ENCODE measurements at regions of chr7 and their contacts with region 1.

Region 1: DNA sequence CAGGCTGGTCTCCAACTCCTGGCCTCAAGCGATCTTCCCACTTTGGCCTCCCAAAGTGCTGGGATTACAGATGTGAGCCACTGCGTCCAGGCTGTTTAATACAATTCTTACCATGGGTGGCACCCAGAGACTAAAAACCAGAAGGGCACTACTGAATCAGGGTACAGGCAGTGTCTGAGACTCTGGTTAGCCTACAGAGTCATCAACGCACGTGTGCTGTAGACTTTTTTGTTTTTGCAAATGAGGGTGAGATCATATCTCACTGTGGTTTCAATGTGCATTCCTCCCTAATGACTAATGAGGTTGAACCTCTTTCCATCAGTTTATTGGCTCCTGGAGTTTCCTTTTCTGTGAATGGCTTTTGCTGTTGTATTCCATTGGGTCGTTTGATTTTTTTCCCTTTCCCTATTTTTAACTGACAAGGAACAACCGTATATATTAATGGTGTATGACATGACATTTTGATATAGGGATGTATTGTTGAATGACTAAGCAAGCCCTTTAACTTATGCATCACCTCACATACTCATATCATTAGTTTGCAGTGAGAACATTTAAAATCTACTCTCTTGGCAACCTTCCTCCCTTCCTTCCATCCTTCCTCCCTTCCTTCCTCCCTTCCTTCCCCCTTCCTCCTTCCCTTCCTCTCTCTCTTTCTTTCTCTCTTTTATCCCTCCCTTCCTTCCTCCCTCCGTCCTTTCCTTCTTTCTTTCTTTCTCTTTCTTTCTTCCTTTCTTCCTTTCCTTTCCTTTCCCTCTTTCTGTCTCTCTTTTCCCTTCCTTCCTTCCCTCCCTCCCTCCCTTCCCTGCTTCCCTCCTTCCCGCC is 9.3 kb upstream of the METTL27 start:
- DNase-seq: peak; percentile 90
- H3K4me3 ChIP-seq: no peak overlapping the region
- CTCF ChIP-seq: no peak

Region 2: GRCh38 chr7:73522105-73522872 is 329.3 kb before region 1 on chr7 and contains the start of gene BAZ1B:
- CTCF ChIA-PET with region 1: no interaction called
- POLR2A ChIA-PET with region 1: no interaction called
- DNase-seq: peak; percentile 73
- H3K4me3 ChIP-seq: peak within 1 kb of the TSS; percentile 76
- CTCF ChIP-seq: peak; percentile 16

Region 3: DNA sequence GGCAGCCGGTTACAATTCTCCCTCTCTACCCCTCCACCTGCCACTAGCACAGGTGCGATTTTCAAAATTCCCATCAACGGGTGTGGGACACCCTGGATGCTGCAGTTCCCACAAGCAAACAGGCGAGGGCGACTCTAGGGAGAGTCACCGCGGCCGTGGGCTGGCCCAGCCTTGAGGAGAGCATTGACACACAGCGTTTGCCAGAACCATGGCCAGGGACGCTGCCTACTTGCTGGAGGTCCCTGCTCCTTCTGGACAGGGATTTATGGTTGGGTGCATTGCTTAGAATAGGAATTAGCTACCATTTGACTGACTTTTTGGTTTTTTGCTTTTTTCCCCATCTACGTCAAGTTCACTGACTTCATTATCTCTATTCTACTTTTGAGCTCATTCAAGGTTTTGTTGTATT is 39.9 kb before region 1 on chr7:
- CTCF ChIA-PET with region 1: interaction called, 114 read pairs
- POLR2A ChIA-PET with region 1: no interaction called
- DNase-seq: no peak
- H3K4me3 ChIP-seq: no peak overlapping the region
- CTCF ChIP-seq: peak; percentile 87

Region 4: DNA sequence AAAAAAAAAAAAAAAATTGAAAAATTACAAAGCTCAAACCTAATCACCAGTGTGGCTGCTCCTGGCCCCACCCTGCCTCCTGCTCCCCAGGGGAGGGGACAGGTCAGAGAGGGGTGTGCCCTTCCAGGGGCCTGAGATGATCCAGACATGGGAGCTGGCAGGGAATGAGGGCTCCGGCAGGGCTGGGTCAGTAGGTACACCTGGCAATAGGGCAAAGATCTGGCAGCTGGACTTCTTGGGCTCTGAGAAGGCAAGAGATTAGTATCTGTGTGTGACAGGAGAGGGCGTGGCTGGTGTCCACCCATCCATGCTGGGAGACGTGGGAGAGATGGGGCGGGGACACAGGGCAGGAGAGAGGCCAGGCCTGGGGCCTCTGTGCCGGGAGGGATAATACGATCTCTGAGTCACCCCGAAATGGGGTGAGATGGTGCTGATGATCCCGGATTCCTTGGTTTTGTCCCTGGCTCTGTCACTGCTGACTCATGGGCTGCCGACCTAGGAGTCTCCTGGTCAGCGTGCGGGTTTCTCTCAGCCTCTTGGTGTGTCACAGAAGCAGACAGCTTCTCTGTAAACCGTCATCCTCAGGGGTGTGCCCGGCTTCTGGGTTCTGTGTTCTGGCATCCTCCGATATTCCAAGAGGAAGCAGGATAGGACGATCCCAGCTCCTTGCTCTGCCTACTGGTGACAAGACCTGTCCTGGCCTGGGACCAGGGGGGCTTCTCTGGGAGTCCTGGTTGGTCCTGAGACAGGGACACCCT is 29.1 kb before region 1 on chr7:
- CTCF ChIA-PET with region 1: interaction called, 14 read pairs
- POLR2A ChIA-PET with region 1: interaction called, 6 read pairs
- DNase-seq: peak; percentile 77
- H3K4me3 ChIP-seq: no peak overlapping the region
- CTCF ChIP-seq: no peak

Region 5: GRCh38 chr7:73828107-73828803 is 23.4 kb before region 1 on chr7:
- CTCF ChIA-PET with region 1: interaction called, 14 read pairs
- POLR2A ChIA-PET with region 1: interaction called, 6 read pairs
- DNase-seq: no peak
- H3K4me3 ChIP-seq: no peak overlapping the region
- CTCF ChIP-seq: no peak

Region 6: DNA sequence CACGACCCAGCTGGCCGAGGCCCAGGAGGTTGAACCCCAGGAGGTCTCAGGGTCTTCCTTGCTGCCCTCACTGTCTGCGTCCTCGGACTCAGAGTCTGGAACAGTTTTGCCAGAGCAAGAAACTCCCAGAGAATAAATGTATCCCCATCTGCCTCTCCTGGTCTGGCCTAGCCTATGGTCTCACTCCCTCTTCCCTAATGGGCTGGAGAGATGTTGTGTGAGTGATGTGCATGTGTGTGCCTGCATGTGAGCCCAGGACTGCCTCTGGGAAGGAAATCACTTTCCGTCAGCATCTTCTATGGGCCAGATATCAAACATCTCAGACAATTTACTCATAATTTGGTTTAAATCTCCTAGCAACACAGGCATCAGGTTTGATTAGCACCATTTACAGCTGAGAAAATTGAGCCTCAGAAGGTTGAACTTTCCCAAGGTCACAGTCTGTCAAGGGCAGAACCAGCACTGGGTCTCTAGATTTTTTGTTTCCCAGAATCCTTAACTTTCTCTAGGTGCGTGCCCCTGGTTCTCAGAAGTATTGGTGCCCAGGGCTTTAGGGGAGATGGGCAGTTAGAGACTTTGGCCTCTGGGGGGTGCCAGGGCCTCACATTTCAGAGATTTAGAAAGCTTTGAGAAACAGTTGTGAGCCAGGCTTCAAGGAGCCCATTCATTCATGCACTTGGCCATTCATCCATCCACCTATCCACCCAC is 14.3 kb after region 1 on chr7:
- CTCF ChIA-PET with region 1: interaction called, 45 read pairs
- POLR2A ChIA-PET with region 1: no interaction called
- DNase-seq: no peak
- H3K4me3 ChIP-seq: no peak overlapping the region
- CTCF ChIP-seq: peak; percentile 74

Region 7: DNA sequence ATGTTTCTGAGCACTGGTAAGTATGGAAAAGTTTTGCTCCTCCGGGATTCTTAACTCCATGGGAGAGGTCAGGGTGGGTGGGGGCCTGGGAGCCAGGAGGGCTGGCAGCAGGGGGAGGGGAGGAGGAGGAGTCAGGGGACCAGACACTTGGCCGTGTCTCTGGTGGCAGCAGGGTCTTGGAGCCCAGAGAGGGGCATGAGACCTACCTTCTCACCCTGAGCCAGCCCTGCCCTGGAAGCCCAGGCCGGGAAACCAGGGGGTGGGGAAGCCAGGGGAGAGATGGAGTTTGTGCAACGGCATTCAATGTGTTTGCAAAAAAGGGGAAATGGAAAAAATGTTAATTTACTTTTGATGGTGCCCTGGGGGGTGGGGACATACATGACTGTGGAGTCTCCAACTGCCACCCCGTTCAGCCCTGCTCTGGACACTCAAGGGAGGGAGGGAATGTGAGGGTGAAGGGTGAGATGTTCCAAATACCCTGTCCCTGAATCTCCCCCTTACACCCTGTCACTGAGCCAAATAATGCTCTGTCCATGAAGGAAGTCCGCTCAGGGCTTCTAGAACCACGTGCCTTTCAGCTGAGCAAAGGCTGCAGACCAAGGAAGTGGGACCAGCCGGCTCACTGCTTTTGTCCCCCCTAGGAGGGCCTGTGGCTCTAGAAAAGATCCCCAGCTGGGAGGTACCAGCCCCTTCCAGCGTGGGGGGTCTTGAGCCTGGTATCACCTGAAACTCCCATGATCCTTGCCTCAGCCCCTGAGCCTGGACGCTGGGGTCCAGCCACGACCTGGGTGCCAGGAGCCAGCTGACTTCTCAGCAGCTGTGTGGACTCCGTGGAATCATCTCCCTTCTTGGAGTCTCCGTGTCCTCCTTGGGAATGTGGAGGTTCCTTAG is 57.7 kb after region 1 on chr7:
- CTCF ChIA-PET with region 1: no interaction called
- POLR2A ChIA-PET with region 1: no interaction called
- DNase-seq: no peak
- H3K4me3 ChIP-seq: no peak overlapping the region
- CTCF ChIP-seq: no peak

Measured in AG04449 (cell line).